ENCODE measurements at regions of chr3 and their contacts with region 1.

Region 1: GRCh38 chr3:57646723-57647122 is 46.2 kb downstream of the DENND6A start:
- DNase-seq: peak in 2 of 9 experiments; percentile 33 to 52
- ATAC-seq: peak; percentile 54
- H3K4me3 ChIP-seq: no peak overlapping the region
- H3K4me3 Mint-ChIP-seq: no peak overlapping the region
- H3K27ac ChIP-seq: peak overlapping the region in 1 of 2 experiments; percentile 36
- H3K27ac Mint-ChIP-seq: peak overlapping the region; percentile 55
- H3K4me1 ChIP-seq: no peaks in the 10 kb centered on the region
- H3K4me1 Mint-ChIP-seq: peaks cover 18% of the 10 kb centered on the region
- H3K27me3 ChIP-seq: no peaks in the 10 kb centered on the region
- H3K27me3 Mint-ChIP-seq: no peaks in the 10 kb centered on the region
- CTCF ChIP-seq: no peak

Region 2: DNA sequence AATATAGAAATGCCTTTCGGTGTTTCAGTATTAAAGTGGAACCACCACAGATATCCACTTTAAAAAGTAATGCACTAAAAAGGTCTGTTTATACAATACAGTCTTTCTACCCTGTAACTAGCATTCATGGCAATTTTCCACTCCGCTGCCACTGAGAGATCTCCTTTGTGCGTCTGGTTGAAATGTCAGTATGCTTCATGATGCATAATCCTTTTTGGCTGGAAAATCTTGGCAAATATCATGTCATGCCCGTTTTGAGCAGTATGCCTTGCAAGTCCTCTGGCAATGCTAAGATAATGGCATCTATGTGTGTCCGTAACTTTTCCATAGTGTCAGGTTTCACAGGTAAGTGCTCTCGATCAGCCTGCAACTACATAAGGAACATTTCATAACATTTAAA is 18.7 kb before region 1 on chr3:
- CTCF ChIA-PET with region 1: no interaction called
- POLR2A ChIA-PET with region 1: no interaction called
- intact Hi-C with region 1: no loop called
- DNase-seq: no peak
- ATAC-seq: no peak
- H3K4me3 ChIP-seq: no peak overlapping the region
- H3K4me3 Mint-ChIP-seq: no peak overlapping the region
- H3K27ac ChIP-seq: no peak overlapping the region
- H3K27ac Mint-ChIP-seq: no peak overlapping the region
- H3K4me1 ChIP-seq: no peaks in the 10 kb centered on the region
- H3K4me1 Mint-ChIP-seq: no peaks in the 10 kb centered on the region
- H3K27me3 ChIP-seq: no peaks in the 10 kb centered on the region
- H3K27me3 Mint-ChIP-seq: no peaks in the 10 kb centered on the region
- CTCF ChIP-seq: no peak

Region 3: GRCh38 chr3:57826245-57826951 is 179.7 kb after region 1 on chr3:
- CTCF ChIA-PET with region 1: interaction called, 3 read pairs
- POLR2A ChIA-PET with region 1: no interaction called
- intact Hi-C with region 1: loop called in 1 of 2 experiments (anchors 5 kb)
- DNase-seq: no peak
- ATAC-seq: no peak
- H3K4me3 ChIP-seq: no peak overlapping the region
- H3K4me3 Mint-ChIP-seq: no peak overlapping the region
- H3K27ac ChIP-seq: no peak overlapping the region
- H3K27ac Mint-ChIP-seq: no peak overlapping the region
- H3K4me1 ChIP-seq: no peaks in the 10 kb centered on the region
- H3K4me1 Mint-ChIP-seq: peaks cover 24% of the 10 kb centered on the region
- H3K27me3 ChIP-seq: no peaks in the 10 kb centered on the region
- H3K27me3 Mint-ChIP-seq: no peaks in the 10 kb centered on the region
- CTCF ChIP-seq: no peak

Region 4: DNA sequence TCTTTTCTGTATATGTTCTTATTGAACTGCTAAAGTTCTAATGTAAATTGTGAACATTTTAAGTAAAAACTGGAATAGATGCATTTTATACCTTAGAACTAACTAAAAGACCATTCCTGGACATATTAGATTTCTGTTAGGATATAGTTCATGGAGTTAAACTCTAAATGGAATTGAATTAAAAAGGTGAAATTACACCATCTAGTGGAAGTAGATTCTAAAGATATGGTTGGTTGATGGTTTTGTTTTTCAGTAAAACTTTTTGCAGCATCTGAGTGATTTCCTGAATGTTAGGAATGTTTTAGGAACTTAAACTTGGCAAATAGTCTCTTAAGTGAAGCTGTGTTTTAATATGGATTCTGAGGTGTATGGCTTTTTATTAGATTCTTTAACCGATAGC is 206.2 kb after region 1 on chr3:
- CTCF ChIA-PET with region 1: no interaction called
- POLR2A ChIA-PET with region 1: no interaction called
- intact Hi-C with region 1: loop called (anchors 5 to 10 kb)
- DNase-seq: peak in 1 of 9 experiments; percentile 3
- ATAC-seq: no peak
- H3K4me3 ChIP-seq: no peak overlapping the region
- H3K4me3 Mint-ChIP-seq: no peak overlapping the region
- H3K27ac ChIP-seq: no peak overlapping the region
- H3K27ac Mint-ChIP-seq: no peak overlapping the region
- H3K4me1 ChIP-seq: no peaks in the 10 kb centered on the region
- H3K4me1 Mint-ChIP-seq: no peaks in the 10 kb centered on the region
- H3K27me3 ChIP-seq: no peaks in the 10 kb centered on the region
- H3K27me3 Mint-ChIP-seq: no peaks in the 10 kb centered on the region
- CTCF ChIP-seq: peak; percentile 25